Heart left ventricle (tissue), 16 donors: ENCODE measurements at regions of chr1 and their contacts with region 1.

Region 1: DNA sequence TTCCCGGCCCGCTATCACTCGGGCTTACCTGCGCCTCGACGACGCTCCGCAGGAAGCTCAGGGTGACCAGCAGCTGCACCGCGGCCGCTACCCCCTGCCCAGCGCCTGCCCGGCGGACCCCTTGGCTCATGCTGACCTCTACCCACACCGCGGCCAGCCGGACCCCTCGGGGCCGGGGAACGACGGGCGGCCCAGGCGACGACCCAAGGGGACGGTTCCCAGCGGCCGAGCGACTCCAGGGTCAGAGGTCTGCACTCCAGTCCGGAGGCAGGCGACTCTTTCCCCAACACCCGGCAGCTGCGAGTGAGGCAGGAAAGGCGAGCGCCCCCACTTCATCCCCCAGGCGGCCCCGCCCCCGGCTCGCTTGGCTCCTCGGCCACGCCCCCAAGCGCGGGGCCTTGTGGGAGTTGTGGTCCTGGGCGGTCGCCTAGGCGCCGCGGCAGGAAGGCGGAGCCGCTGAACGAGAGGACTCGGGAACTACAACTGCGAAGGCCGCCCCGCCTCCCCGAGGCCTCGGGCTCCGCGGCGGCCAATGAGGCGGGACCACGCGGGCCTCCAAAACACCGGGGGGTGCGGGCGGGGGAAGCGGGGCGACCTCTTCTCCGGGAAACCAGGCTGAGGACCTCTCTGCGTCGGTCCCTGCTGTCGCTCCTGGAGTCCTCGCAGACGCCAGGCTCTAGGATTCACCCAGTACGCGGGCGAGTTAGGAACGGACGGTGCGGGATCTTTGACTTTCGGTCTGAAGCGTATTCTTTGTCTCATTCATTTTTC is at the start of gene ERO1B:
- DNase-seq: peak; percentile 97 to 99 (median 98)
- ATAC-seq: peak; percentile 98 to 100 (median 100)
- H3K4me3 ChIP-seq: peak within 1 kb of the TSS; percentile 80 to 100 (median 94)
- H3K27ac ChIP-seq: peak within 1 kb of the TSS; percentile 43 to 91 (median 85)
- H3K4me1 ChIP-seq: peaks cover 0 to 18% (median 6%) of the 10 kb centered on the region in 12 donors
- H3K27me3 ChIP-seq: peaks cover 0 to 6% (median 0%) of the 10 kb centered on the region in 9 donors
- CTCF ChIP-seq: peak in 2 of 12 donors; percentile 8 to 27
- POLR2A ChIP-seq: peak; percentile 88 to 99
- total RNA-seq, gene ERO1B: 6.1 to 11.4 (median 6.9) TPM

Region 2: DNA sequence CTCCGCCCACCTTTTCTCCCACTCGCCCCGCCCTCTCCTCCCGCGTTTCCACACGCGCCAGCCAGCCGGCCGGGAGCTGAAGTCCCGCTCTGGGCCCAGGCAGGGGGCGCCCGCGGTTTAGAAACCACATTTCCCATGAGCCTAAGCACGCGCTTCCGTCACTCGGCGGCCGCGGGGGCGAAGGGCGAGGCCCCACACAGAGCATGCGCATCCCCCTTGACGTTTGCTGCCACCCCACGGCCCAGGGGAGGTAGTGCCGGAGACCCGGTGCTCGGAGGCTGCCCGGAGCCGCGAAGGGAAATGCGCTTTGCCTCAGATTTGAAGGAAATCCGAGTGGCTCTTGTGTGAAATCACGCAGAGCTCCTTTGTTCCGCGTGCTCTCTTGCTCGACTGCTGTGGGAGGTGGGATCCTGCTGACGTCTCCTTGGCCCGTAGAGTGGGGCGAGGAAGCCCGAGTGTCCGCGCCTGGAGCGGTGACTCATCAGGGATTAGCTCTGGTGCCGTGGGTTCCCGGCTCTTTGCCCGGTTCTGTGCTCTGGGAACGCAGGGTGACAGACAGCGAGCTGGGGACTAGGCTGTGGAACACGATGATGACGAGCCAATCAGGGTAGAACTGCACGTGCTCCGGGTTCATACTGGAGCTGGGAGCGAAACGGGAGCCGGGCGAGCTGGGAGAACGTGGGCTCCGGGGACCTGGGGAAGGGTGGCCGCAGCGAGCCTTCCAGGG is 777.2 kb before region 1 on chr1:
- intact Hi-C with region 1: loop called in 1 of 10 experiments (anchors 10 kb)
- DNase-seq: peak; percentile 99 to 100 (median 99)
- ATAC-seq: peak; percentile 94 to 96 (median 94)
- H3K4me3 ChIP-seq: peak overlapping the region; percentile 58 to 96 (median 83)
- H3K27ac ChIP-seq: peak overlapping the region; percentile 92 to 99 (median 98)
- H3K4me1 ChIP-seq: peaks cover 0 to 32% (median 16%) of the 10 kb centered on the region in 12 donors
- H3K27me3 ChIP-seq: no peaks in the 10 kb centered on the region
- CTCF ChIP-seq: peak; percentile 80 to 100 (median 92)
- POLR2A ChIP-seq: peak; percentile 6 to 61

Region 3: GRCh38 chr1:236113324-236114032 is 168.4 kb before region 1 on chr1:
- intact Hi-C with region 1: loop called in 4 of 10 experiments (anchors 5 to 10 kb)
- DNase-seq: peak in 3 of 5 donors; percentile 41 to 73 (median 58)
- ATAC-seq: peak; percentile 72 to 89 (median 86)
- H3K4me3 ChIP-seq: no peak overlapping the region
- H3K27ac ChIP-seq: peak overlapping the region; percentile 45 to 84 (median 72)
- H3K4me1 ChIP-seq: peaks cover 0 to 16% (median 0%) of the 10 kb centered on the region in 12 donors
- H3K27me3 ChIP-seq: no peaks in the 10 kb centered on the region
- CTCF ChIP-seq: no peak
- POLR2A ChIP-seq: no peak

Region 4: GRCh38 chr1:236142253-236143103 is 139.4 kb before region 1 on chr1 and contains the start of gene GPR137B:
- intact Hi-C with region 1: loop called in 3 of 10 experiments (anchors 2 to 10 kb)
- DNase-seq: peak; percentile 65 to 74 (median 66)
- ATAC-seq: peak in 3 of 4 donors; percentile 44 to 61 (median 61)
- H3K4me3 ChIP-seq: peak within 1 kb of the TSS; percentile 61 to 98 (median 82)
- H3K27ac ChIP-seq: peak within 1 kb of the TSS in 11 of 12 donors; percentile 6 to 82 (median 70)
- H3K4me1 ChIP-seq: peaks cover 0 to 51% (median 22%) of the 10 kb centered on the region in 12 donors
- H3K27me3 ChIP-seq: peaks cover 0 to 12% (median 0%) of the 10 kb centered on the region in 9 donors
- CTCF ChIP-seq: no peak
- POLR2A ChIP-seq: peak in 1 of 2 donors; percentile 52
- total RNA-seq, gene GPR137B: 27.7 to 49.8 (median 48.4) TPM

Region 5: GRCh38 chr1:236523701-236524141 is 241.9 kb after region 1 on chr1 and contains the start of gene LGALS8:
- intact Hi-C with region 1: loop called in 1 of 10 experiments (anchors 5 kb)
- DNase-seq: peak; percentile 93 to 95 (median 94)
- ATAC-seq: peak; percentile 93 to 96 (median 95)
- H3K4me3 ChIP-seq: peak within 1 kb of the TSS; percentile 61 to 100 (median 82)
- H3K27ac ChIP-seq: peak within 1 kb of the TSS; percentile 73 to 99 (median 92)
- H3K4me1 ChIP-seq: peaks cover 0 to 24% (median 11%) of the 10 kb centered on the region in 12 donors
- H3K27me3 ChIP-seq: no peaks in the 10 kb centered on the region
- CTCF ChIP-seq: peak in 1 of 12 donors; percentile 10
- POLR2A ChIP-seq: peak in 1 of 2 donors; percentile 52
- total RNA-seq, gene LGALS8: 69.3 to 114 (median 94.8) TPM

Region 6: GRCh38 chr1:236795035-236795756 is 513.4 kb after region 1 on chr1 and contains the start of gene MTR:
- intact Hi-C with region 1: loop called in 1 of 10 experiments (anchors 10 kb)
- DNase-seq: peak; percentile 98 to 99 (median 98)
- ATAC-seq: peak; percentile 99
- H3K4me3 ChIP-seq: peak within 1 kb of the TSS; percentile 71 to 99 (median 84)
- H3K27ac ChIP-seq: peak within 1 kb of the TSS; percentile 67 to 97 (median 92)
- H3K4me1 ChIP-seq: peaks cover 0 to 38% (median 24%) of the 10 kb centered on the region in 12 donors
- H3K27me3 ChIP-seq: no peaks in the 10 kb centered on the region
- CTCF ChIP-seq: no peak
- POLR2A ChIP-seq: peak; percentile 88 to 96
- total RNA-seq, gene MTR: 30.8 to 84.2 (median 51.4) TPM